ENCODE measurements at regions of chr16 and their contacts with region 1.

Region 1: GRCh38 chr16:78503602-78504001 is 404.1 kb downstream of the WWOX start:
- DNase-seq: peak; percentile 40 to 57
- H3K4me3 ChIP-seq: no peak overlapping the region
- H3K27ac ChIP-seq: no peak overlapping the region
- H3K4me1 ChIP-seq: peaks cover 10 to 29% of the 10 kb centered on the region in 2 donors
- H3K27me3 ChIP-seq: no peaks in the 10 kb centered on the region
- CTCF ChIP-seq: peak; percentile 77 to 87 (median 81)
- POLR2A ChIP-seq: no peak

Region 2: GRCh38 chr16:78607486-78607885 is 103.9 kb after region 1 on chr16:
- intact Hi-C with region 1: no loop called
- DNase-seq: peak; percentile 46 to 50
- H3K4me3 ChIP-seq: no peak overlapping the region
- H3K27ac ChIP-seq: peak overlapping the region in 2 of 3 donors; percentile 65 to 79
- H3K4me1 ChIP-seq: peaks cover 21 to 31% of the 10 kb centered on the region in 2 donors
- H3K27me3 ChIP-seq: no peaks in the 10 kb centered on the region
- CTCF ChIP-seq: no peak
- POLR2A ChIP-seq: no peak

Region 3: DNA sequence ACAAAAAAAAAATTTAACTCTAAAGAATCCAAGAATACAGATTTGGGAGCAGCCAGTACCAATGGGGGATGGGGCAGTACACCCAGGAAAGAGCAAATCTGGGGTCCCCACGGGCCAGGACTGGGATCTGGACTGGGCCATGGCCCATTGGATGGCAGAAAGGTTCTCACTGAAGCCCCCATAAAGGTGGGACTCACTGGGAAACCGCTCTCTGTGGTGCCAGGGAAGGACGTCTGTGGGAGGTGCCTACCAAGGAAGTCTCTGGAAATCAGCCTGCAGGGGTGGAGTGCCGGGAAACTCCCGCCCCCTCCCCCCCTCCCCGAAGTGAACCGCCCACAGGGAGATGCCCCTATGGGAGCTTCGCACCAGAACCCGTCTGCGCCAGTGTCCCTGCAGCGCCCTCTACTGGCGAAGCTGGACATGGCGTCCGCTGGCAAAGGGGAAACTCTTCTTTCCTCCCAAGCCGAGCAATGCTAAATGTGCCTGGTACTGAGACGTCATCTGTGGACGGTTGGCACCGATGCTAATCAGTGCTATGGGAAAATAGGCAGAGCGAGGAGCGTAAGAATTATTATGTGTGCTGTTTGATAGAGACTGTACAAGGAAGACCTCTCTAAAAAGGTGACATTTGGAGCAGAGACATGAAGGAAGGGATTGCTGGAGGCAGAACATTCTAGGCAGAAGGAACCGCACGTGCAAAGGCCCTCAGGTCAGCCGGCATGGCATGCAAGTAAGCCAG is 266.9 kb after region 1 on chr16:
- intact Hi-C with region 1: loop called (anchors 5 kb)
- DNase-seq: peak; percentile 71 to 81
- H3K4me3 ChIP-seq: no peak overlapping the region
- H3K27ac ChIP-seq: peak overlapping the region in 1 of 3 donors; percentile 54
- H3K4me1 ChIP-seq: peaks cover 3 to 5% of the 10 kb centered on the region in 2 donors
- H3K27me3 ChIP-seq: no peaks in the 10 kb centered on the region
- CTCF ChIP-seq: peak; percentile 67 to 96 (median 82)
- POLR2A ChIP-seq: no peak

Region 4: GRCh38 chr16:79601931-79602627 is 1098.5 kb after region 1 on chr16:
- intact Hi-C with region 1: loop called (anchors 10 kb)
- DNase-seq: peak; percentile 81 to 89
- H3K4me3 ChIP-seq: peak overlapping the region in 2 of 3 donors; percentile 41 to 71
- H3K27ac ChIP-seq: peak overlapping the region; percentile 89 to 99 (median 99)
- H3K4me1 ChIP-seq: peaks cover 0 to 7% of the 10 kb centered on the region in 2 donors
- H3K27me3 ChIP-seq: no peaks in the 10 kb centered on the region
- CTCF ChIP-seq: peak; percentile 36 to 85 (median 80)
- POLR2A ChIP-seq: peak in 1 of 2 donors; percentile 22